Mammary epithelial cell (primary cell): ENCODE measurements at regions of chr11 and their contacts with region 1.

Region 1: DNA sequence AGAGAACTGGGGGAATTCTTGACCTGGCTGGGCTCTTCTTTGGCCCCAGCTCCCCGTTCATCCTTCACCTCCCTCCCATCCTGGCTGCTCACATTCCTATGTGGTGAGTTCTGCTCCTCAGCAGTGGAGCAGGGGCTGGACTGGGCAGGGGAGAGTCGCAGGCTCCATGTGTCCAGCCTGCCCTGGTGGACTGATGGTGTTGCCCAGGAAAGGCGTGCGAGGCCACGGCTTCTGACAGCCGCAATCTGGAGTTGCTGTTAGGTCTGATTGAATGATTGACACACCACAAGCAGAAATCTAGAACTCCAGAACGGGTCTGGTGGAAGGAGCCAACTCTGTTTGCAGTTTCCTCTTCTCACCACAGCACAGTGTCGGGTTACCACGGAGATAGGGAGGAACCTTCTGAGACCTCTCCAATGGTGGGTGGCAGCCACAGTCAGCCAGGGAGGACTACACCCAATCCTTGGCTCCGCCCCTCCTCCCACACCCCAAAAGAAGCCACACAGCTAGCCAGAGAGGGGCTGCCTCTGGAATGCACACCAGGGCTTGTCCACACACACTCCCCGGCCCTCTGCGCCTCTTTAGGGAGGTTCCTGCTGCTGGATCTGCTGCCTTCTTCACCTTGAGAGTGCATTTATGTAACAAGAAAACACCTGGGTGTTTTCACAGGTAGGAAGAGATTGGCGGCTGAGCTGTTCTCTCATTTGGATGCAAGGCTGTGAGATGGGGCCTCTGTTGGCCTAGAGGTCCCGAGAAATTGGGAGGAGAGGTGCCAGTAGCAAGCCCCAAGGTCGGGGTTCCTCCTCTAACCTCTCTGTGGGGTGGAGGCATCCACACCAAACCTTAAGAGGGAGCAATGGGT is 56.4 kb upstream of the CD44 start:
- DNase-seq: peak; percentile 86
- H3K4me3 ChIP-seq: peak overlapping the region in 1 of 3 experiments; percentile 11
- H3K27ac ChIP-seq: peak overlapping the region; percentile 96
- H3K4me1 ChIP-seq: peaks cover 60% of the 10 kb centered on the region
- H3K27me3 ChIP-seq: no peaks in the 10 kb centered on the region
- CTCF ChIP-seq: peak in 1 of 2 donors; percentile 2

Region 2: GRCh38 chr11:35006389-35007128 is 76.0 kb before region 1 on chr11:
- CTCF ChIA-PET with region 1: no interaction called
- dilution Hi-C with region 1: loop called (anchors 5 kb)
- in situ Hi-C with region 1: no loop called
- intact Hi-C with region 1: loop called (anchors 2 kb)
- DNase-seq: no peak
- H3K4me3 ChIP-seq: no peak overlapping the region
- H3K27ac ChIP-seq: no peak overlapping the region
- H3K4me1 ChIP-seq: peaks cover 25% of the 10 kb centered on the region
- H3K27me3 ChIP-seq: no peaks in the 10 kb centered on the region
- CTCF ChIP-seq: no peak

Region 3: DNA sequence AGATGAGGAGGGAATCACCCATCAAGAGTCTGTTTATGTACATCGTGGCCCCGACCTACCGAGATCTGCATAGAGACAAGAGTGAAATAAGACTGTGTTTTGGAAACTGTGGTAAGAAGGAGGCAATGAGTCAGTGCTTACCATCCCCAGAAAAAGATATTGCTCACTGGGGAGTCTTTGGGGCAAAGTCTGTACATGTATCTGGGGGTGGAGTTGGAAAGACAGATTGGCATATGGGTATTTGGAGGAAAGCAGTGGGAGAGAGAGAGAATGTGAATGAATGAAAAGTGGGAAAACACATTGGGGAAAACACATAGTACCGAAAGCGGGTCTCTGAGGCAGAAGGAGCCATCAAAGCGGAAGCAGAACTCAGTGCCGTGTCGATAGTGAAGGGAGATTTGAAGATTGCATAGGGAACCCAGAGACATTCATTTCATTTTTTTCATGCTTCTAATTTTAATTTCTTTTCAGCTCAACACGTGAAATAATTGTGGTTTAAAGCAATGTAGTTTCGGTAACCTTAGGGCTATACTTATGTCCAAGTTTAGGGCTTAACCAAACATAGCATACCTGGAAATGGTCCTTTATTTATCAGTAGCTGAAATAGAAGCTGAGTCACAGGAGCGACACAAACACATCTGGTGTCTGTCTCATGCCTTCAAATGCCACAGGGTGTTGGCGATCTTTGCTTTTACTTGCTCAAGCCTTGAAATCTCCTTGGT is 42.2 kb before region 1 on chr11:
- CTCF ChIA-PET with region 1: no interaction called
- dilution Hi-C with region 1: no loop called
- in situ Hi-C with region 1: no loop called
- intact Hi-C with region 1: loop called (anchors 2 kb)
- DNase-seq: peak; percentile 99
- H3K4me3 ChIP-seq: peak overlapping the region; percentile 4 to 40 (median 32)
- H3K27ac ChIP-seq: peak overlapping the region; percentile 97
- H3K4me1 ChIP-seq: peaks cover 64% of the 10 kb centered on the region
- H3K27me3 ChIP-seq: no peaks in the 10 kb centered on the region
- CTCF ChIP-seq: no peak

Region 4: GRCh38 chr11:35111161-35112055 is 28.9 kb after region 1 on chr11:
- CTCF ChIA-PET with region 1: no interaction called
- dilution Hi-C with region 1: loop called (anchors 5 kb)
- in situ Hi-C with region 1: no loop called
- intact Hi-C with region 1: loop called (anchors 1 kb)
- DNase-seq: peak; percentile 99
- H3K4me3 ChIP-seq: peak overlapping the region in 1 of 3 experiments; percentile 17
- H3K27ac ChIP-seq: peak overlapping the region; percentile 94
- H3K4me1 ChIP-seq: peaks cover 70% of the 10 kb centered on the region
- H3K27me3 ChIP-seq: no peaks in the 10 kb centered on the region
- CTCF ChIP-seq: no peak